ENCODE measurements at regions of chr17 and their contacts with region 1.

Region 1: GRCh38 chr17:78736526-78737079 is 45.5 kb downstream of the CYTH1 start:
- DNase-seq: peak; percentile 48 to 80 (median 71)
- H3K4me3 ChIP-seq: peak overlapping the region; percentile 79
- H3K4me3 Mint-ChIP-seq: peak overlapping the region; percentile 83 to 95 (median 90)
- H3K27ac ChIP-seq: peak overlapping the region; percentile 53
- H3K27ac Mint-ChIP-seq: peak overlapping the region; percentile 82 to 93 (median 90)
- H3K4me1 ChIP-seq: peaks cover 93% of the 10 kb centered on the region
- H3K4me1 Mint-ChIP-seq: peaks cover 89 to 97% (median 97%) of the 10 kb centered on the region in 3 donors
- H3K27me3 ChIP-seq: no peaks in the 10 kb centered on the region
- H3K27me3 Mint-ChIP-seq: peaks cover 0 to 4% of the 10 kb centered on the region in 2 donors

Region 2: DNA sequence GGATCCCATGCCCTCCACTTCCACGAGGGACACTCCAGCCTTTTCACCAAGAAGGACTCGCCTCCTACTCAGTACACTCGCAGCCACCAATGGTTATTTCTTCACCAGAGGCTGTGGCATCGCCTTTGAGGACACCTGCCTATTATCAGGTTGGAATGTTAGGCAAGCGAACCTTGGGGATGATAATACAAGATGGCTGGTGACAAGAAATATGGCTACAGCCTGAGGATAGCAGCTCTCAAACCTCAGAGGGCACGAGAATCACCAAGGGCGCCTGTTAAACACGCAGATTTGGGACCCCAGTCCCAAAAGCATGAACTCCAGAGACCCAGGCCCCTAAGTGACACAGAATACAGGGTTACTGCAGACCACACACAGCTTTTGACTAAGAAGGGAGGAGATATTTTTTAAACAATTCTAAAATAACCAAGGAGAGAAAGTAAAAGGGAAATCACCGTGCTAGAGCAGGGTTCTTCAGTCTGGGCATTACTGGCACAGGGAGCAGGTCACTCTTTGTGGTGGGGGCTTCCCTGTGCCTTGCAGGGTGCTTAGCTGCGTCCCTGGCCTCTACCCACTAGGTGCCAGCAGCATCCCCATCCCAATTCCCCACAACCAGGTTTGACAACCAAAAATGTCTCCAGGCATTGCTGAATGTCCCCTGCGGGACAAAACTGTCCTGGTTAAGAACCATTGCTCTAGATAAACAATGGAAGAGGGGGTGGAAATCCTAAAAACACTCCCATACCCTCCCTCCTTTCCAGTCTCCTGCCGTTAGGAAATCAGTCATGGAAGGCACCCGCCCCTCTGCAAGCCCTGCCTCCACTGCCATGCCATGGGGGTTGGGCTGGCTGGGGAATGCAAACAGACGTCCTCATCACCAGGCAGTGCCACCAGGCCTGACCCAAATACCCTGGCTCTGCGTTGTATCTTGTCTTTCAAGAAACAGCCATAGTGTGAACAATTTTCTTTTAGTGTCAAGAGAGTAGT is 12.4 kb before region 1 on chr17:
- CTCF ChIA-PET with region 1: interaction called, 12 read pairs
- POLR2A ChIA-PET with region 1: interaction called, 3 read pairs
- DNase-seq: no peak
- H3K4me3 ChIP-seq: peak overlapping the region; percentile 16
- H3K4me3 Mint-ChIP-seq: peak overlapping the region; percentile 63 to 78 (median 73)
- H3K27ac ChIP-seq: no peak overlapping the region
- H3K27ac Mint-ChIP-seq: peak overlapping the region; percentile 63 to 96 (median 84)
- H3K4me1 ChIP-seq: peaks cover 99% of the 10 kb centered on the region
- H3K4me1 Mint-ChIP-seq: peaks cover 84 to 99% (median 95%) of the 10 kb centered on the region in 3 donors
- H3K27me3 ChIP-seq: no peaks in the 10 kb centered on the region
- H3K27me3 Mint-ChIP-seq: peaks cover 0 to 2% of the 10 kb centered on the region in 2 donors

Region 3: GRCh38 chr17:78748730-78749317 is 12.2 kb after region 1 on chr17:
- CTCF ChIA-PET with region 1: interaction called, 17 read pairs
- POLR2A ChIA-PET with region 1: interaction called, 11 read pairs
- DNase-seq: peak; percentile 61 to 89 (median 88)
- H3K4me3 ChIP-seq: peak overlapping the region; percentile 65
- H3K4me3 Mint-ChIP-seq: peak overlapping the region; percentile 69 to 88 (median 78)
- H3K27ac ChIP-seq: peak overlapping the region; percentile 73
- H3K27ac Mint-ChIP-seq: peak overlapping the region; percentile 79 to 98 (median 90)
- H3K4me1 ChIP-seq: peaks cover 96% of the 10 kb centered on the region
- H3K4me1 Mint-ChIP-seq: peaks cover 93 to 100% (median 100%) of the 10 kb centered on the region in 3 donors
- H3K27me3 ChIP-seq: no peaks in the 10 kb centered on the region
- H3K27me3 Mint-ChIP-seq: no peaks in the 10 kb centered on the region

Region 4: GRCh38 chr17:78805301-78805700 is 68.7 kb after region 1 on chr17:
- CTCF ChIA-PET with region 1: interaction called, 8 read pairs
- POLR2A ChIA-PET with region 1: interaction called, 10 read pairs
- DNase-seq: peak in 4 of 5 donors; percentile 57 to 79 (median 62)
- H3K4me3 ChIP-seq: no peak overlapping the region
- H3K4me3 Mint-ChIP-seq: peak overlapping the region; percentile 52 to 77 (median 66)
- H3K27ac ChIP-seq: peak overlapping the region; percentile 21
- H3K27ac Mint-ChIP-seq: peak overlapping the region; percentile 85 to 98 (median 94)
- H3K4me1 ChIP-seq: peaks cover 47% of the 10 kb centered on the region
- H3K4me1 Mint-ChIP-seq: peaks cover 48 to 51% (median 50%) of the 10 kb centered on the region in 3 donors
- H3K27me3 ChIP-seq: no peaks in the 10 kb centered on the region
- H3K27me3 Mint-ChIP-seq: no peaks in the 10 kb centered on the region

Measured in CD8-positive, alpha-beta memory T cell (primary cell).